ENCODE measurements at regions of chr7 and their contacts with region 1.

Region 1: DNA sequence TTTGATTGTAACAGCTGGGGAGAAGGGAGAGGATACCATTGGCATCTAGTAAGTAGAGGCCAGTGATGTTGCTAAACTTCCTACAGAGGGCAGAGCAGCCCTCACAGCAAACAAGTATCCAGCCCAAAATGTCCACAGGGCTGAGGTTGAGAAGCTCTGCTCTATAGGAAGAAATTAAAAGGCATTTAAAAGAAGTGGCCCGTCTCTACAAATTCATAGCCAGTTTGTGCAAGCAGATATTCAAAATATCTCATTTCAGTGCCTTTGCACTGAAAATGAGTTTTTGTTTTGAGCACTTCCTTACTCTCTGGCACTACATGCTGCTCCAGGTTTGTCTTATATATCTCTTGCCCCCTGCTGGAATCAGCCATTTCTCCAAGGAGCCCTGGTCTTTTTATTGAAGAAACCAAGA is 330.0 kb downstream of the BBS9 start:
- DNase-seq: no peak
- H3K4me3 ChIP-seq: no peak overlapping the region
- H3K27ac ChIP-seq: no peak overlapping the region
- H3K4me1 ChIP-seq: no peaks in the 10 kb centered on the region
- H3K27me3 ChIP-seq: no peaks in the 10 kb centered on the region
- CTCF ChIP-seq: peak; percentile 45

Region 2: GRCh38 chr7:33351709-33352108 is 107.6 kb before region 1 on chr7:
- intact Hi-C with region 1: no loop called
- DNase-seq: no peak
- H3K4me3 ChIP-seq: no peak overlapping the region
- H3K27ac ChIP-seq: no peak overlapping the region
- H3K4me1 ChIP-seq: no peaks in the 10 kb centered on the region
- H3K27me3 ChIP-seq: no peaks in the 10 kb centered on the region
- CTCF ChIP-seq: no peak

Region 3: GRCh38 chr7:33744293-33745075 is 285.1 kb after region 1 on chr7:
- intact Hi-C with region 1: loop called (anchors 10 kb)
- DNase-seq: no peak
- H3K4me3 ChIP-seq: no peak overlapping the region
- H3K27ac ChIP-seq: no peak overlapping the region
- H3K4me1 ChIP-seq: no peaks in the 10 kb centered on the region
- H3K27me3 ChIP-seq: no peaks in the 10 kb centered on the region
- CTCF ChIP-seq: peak; percentile 47

Region 4: DNA sequence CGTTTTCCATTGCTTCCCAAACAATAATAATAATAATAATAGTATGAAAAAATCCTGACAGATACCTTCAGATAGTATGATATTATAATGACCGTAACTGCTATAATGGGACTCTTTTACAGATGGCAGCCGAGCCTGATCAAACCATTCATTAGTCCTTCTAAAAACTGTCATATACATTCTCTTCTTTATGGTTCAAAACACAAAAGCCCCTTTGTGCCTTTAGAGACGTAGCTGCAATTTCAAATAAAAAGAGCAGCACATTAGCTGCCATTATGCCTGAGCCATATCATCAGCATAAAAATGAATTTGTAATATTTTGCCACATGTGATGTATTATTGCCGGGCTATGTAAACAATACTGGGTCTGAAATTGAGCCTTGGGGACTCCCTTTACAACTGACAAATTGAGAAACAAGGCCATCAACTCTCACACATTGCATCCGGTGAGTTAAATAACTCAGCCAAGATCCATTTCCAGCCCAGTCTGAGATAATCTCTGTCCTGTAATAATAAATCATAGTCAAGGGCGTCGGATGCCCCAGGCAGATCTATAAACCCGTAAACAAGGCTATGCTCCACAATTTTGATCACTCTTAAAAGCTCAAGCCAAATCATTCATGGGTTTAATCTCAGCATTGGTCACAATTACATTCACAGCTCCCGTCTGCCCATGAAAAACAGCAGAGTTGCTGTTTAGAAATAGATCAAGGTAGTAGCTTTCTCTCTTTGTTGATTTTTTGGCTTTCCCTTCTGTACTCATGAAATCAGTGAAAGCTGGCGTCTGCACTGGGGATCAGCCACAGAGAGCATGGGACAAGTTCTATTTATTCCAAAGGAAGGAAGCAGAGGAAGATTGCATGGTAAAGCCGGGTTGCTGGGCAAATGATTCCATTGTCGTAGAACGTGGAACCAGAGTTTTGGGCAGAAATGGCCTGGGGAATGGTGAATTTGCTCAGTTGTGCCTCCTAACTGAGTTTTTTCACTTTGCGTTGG is 295.9 kb after region 1 on chr7:
- intact Hi-C with region 1: no loop called
- DNase-seq: no peak
- H3K4me3 ChIP-seq: no peak overlapping the region
- H3K27ac ChIP-seq: no peak overlapping the region
- H3K4me1 ChIP-seq: peaks cover 4% of the 10 kb centered on the region
- H3K27me3 ChIP-seq: no peaks in the 10 kb centered on the region
- CTCF ChIP-seq: no peak